ENCODE measurements at regions of chr12 and their contacts with region 1.

Region 1: GRCh38 chr12:117098361-117099217 is 627 bp downstream of the TESC start:
- DNase-seq: peak; percentile 58
- ATAC-seq: peak; percentile 44
- H3K4me3 ChIP-seq: peak overlapping the region; percentile 3 to 66 (median 51)
- H3K4me3 Mint-ChIP-seq: peak overlapping the region; percentile 82
- H3K27ac ChIP-seq: peak overlapping the region in 1 of 2 donors; percentile 30
- H3K27ac Mint-ChIP-seq: no peak overlapping the region
- H3K4me1 ChIP-seq: peaks cover 11 to 14% of the 10 kb centered on the region in 2 donors
- H3K4me1 Mint-ChIP-seq: peaks cover 9% of the 10 kb centered on the region
- H3K27me3 ChIP-seq: peaks cover 0 to 22% (median 9%) of the 10 kb centered on the region in 4 experiments
- H3K27me3 Mint-ChIP-seq: peaks cover 21% of the 10 kb centered on the region
- CTCF ChIP-seq: no peak

Region 2: GRCh38 chr12:117069926-117070900 is 28.4 kb before region 1 on chr12:
- CTCF ChIA-PET with region 1: no interaction called
- POLR2A ChIA-PET with region 1: no interaction called
- intact Hi-C with region 1: no loop called
- DNase-seq: no peak
- ATAC-seq: no peak
- H3K4me3 ChIP-seq: no peak overlapping the region
- H3K4me3 Mint-ChIP-seq: no peak overlapping the region
- H3K27ac ChIP-seq: no peak overlapping the region
- H3K27ac Mint-ChIP-seq: no peak overlapping the region
- H3K4me1 ChIP-seq: peaks cover 0 to 8% of the 10 kb centered on the region in 2 donors
- H3K4me1 Mint-ChIP-seq: peaks cover 1% of the 10 kb centered on the region
- H3K27me3 ChIP-seq: no peaks in the 10 kb centered on the region
- H3K27me3 Mint-ChIP-seq: no peaks in the 10 kb centered on the region
- CTCF ChIP-seq: no peak

Region 3: GRCh38 chr12:117143008-117143532 is 44.5 kb after region 1 on chr12:
- CTCF ChIA-PET with region 1: interaction called, 3 read pairs
- POLR2A ChIA-PET with region 1: interaction called, 3 read pairs
- intact Hi-C with region 1: loop called (anchors 2 kb)
- DNase-seq: peak; percentile 27
- ATAC-seq: peak; percentile 31
- H3K4me3 ChIP-seq: no peak overlapping the region
- H3K4me3 Mint-ChIP-seq: peak overlapping the region; percentile 41
- H3K27ac ChIP-seq: peak overlapping the region in 1 of 2 donors; percentile 43
- H3K27ac Mint-ChIP-seq: peak overlapping the region; percentile 92
- H3K4me1 ChIP-seq: peaks cover 0 to 3% of the 10 kb centered on the region in 2 donors
- H3K4me1 Mint-ChIP-seq: peaks cover 21% of the 10 kb centered on the region
- H3K27me3 ChIP-seq: no peaks in the 10 kb centered on the region
- H3K27me3 Mint-ChIP-seq: no peaks in the 10 kb centered on the region
- CTCF ChIP-seq: no peak

Measured in B cell (primary cell).